CD4-positive, alpha-beta T cell (primary cell): ENCODE measurements at regions of chr3 and their contacts with region 1.

Region 1: GRCh38 chr3:155805802-155806618 is at the start of gene C3orf33:
- DNase-seq: peak; percentile 46 to 90 (median 71)
- ATAC-seq: peak; percentile 95
- H3K4me3 ChIP-seq: peak within 1 kb of the TSS; percentile 90
- H3K4me3 Mint-ChIP-seq: peak within 1 kb of the TSS; percentile 89
- H3K27ac ChIP-seq: peak within 1 kb of the TSS; percentile 46 to 61
- H3K27ac Mint-ChIP-seq: peak within 1 kb of the TSS; percentile 80
- H3K4me1 ChIP-seq: peaks cover 13% of the 10 kb centered on the region
- H3K4me1 Mint-ChIP-seq: peaks cover 17% of the 10 kb centered on the region
- H3K27me3 ChIP-seq: no peaks in the 10 kb centered on the region
- H3K27me3 Mint-ChIP-seq: peaks cover 6% of the 10 kb centered on the region
- CTCF ChIP-seq: peak; percentile 98
- total RNA-seq, gene C3orf33: 2.4 to 2.6 TPM

Region 2: GRCh38 chr3:155737844-155738460 is 68.1 kb before region 1 on chr3:
- CTCF ChIA-PET with region 1: interaction called, 4 read pairs
- POLR2A ChIA-PET with region 1: no interaction called
- intact Hi-C with region 1: loop called in 1 of 2 experiments (anchors 2 kb)
- DNase-seq: no peak
- ATAC-seq: no peak
- H3K4me3 ChIP-seq: no peak overlapping the region
- H3K4me3 Mint-ChIP-seq: no peak overlapping the region
- H3K27ac ChIP-seq: no peak overlapping the region
- H3K27ac Mint-ChIP-seq: no peak overlapping the region
- H3K4me1 ChIP-seq: no peaks in the 10 kb centered on the region
- H3K4me1 Mint-ChIP-seq: peaks cover 6% of the 10 kb centered on the region
- H3K27me3 ChIP-seq: peaks cover 8 to 23% of the 10 kb centered on the region in 2 experiments
- H3K27me3 Mint-ChIP-seq: peaks cover 53% of the 10 kb centered on the region
- CTCF ChIP-seq: no peak

Region 3: DNA sequence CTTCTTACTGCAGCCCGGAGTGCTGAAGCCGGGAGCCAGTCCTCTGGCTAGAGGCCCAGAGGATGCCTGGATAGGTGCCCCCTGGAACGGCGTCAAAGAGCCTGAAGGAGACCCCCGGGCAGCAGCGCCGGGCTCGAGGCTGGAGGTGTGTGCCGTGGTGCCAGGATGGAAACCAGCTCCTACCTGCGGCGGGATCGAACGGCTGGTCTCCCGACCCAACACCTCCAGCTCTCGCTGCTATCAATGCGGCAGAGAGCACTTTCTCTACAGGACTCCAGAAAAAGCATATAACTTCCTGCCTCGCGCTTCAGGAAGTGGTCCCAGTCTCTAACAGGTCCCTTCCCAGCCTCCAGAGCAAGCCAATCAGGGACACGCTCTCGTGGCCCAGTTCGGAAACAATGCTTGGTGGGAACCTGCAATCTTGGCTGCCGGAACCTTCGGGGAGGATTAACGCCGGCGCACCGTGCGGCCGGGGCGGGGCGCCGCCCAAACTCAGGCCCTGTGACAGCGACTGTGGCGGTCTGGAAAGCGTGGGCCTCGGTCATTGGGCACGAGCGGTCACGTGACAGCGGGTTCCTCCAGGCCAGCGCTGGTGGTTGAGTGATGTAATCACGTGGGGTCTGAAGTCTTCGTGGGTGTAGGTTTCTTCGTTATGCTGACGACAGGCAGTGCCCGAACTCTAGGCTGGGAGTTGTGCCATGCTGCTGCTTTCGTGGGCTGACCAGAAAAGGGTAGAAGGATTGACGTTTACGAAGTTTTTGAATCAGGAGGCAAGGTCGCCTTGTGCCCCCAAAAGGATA is 48.3 kb after region 1 on chr3 and contains the start of gene SLC33A1:
- CTCF ChIA-PET with region 1: interaction called, 20 read pairs
- POLR2A ChIA-PET with region 1: interaction called, 27 read pairs
- intact Hi-C with region 1: loop called (anchors 2 kb)
- DNase-seq: peak; percentile 96 to 100 (median 98)
- ATAC-seq: peak; percentile 90
- H3K4me3 ChIP-seq: peak within 1 kb of the TSS; percentile 93
- H3K4me3 Mint-ChIP-seq: peak within 1 kb of the TSS; percentile 97
- H3K27ac ChIP-seq: peak within 1 kb of the TSS; percentile 74 to 98
- H3K27ac Mint-ChIP-seq: peak within 1 kb of the TSS; percentile 98
- H3K4me1 ChIP-seq: peaks cover 52% of the 10 kb centered on the region
- H3K4me1 Mint-ChIP-seq: peaks cover 47% of the 10 kb centered on the region
- H3K27me3 ChIP-seq: no peaks in the 10 kb centered on the region
- H3K27me3 Mint-ChIP-seq: no peaks in the 10 kb centered on the region
- CTCF ChIP-seq: peak; percentile 2
- total RNA-seq, gene SLC33A1: 14.6 to 16.4 TPM

Region 4: DNA sequence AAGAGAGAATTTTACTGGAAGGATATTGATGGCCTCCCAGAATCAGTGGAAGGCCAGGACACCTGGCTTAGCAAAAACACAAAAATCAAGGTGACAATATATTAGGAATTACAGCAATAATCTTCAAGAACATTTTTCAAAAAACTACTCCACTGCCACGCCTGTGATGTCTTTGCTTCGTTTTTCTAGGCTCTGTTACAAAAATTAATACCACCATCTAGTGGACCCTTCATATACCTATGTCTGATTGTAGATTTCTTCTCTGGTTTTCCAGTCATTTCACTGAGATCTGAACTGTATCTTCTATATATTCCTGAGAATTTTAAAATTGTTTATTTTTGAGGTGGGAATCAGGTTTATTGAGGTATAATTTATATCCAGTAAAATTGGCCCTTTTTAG is 53.8 kb after region 1 on chr3:
- CTCF ChIA-PET with region 1: interaction called, 21 read pairs
- POLR2A ChIA-PET with region 1: interaction called, 3 read pairs
- intact Hi-C with region 1: loop called (anchors 2 kb)
- DNase-seq: peak in 3 of 14 experiments; percentile 26 to 30 (median 26)
- ATAC-seq: no peak
- H3K4me3 ChIP-seq: no peak overlapping the region
- H3K4me3 Mint-ChIP-seq: no peak overlapping the region
- H3K27ac ChIP-seq: no peak overlapping the region
- H3K27ac Mint-ChIP-seq: no peak overlapping the region
- H3K4me1 ChIP-seq: peaks cover 20% of the 10 kb centered on the region
- H3K4me1 Mint-ChIP-seq: peaks cover 3% of the 10 kb centered on the region
- H3K27me3 ChIP-seq: no peaks in the 10 kb centered on the region
- H3K27me3 Mint-ChIP-seq: no peaks in the 10 kb centered on the region
- CTCF ChIP-seq: no peak

Region 5: GRCh38 chr3:155870133-155870944 is 64.3 kb after region 1 on chr3 and contains the start of gene GMPS:
- CTCF ChIA-PET with region 1: interaction called, 54 read pairs
- POLR2A ChIA-PET with region 1: interaction called, 45 read pairs
- intact Hi-C with region 1: loop called (anchors 2 to 5 kb)
- DNase-seq: peak; percentile 87 to 98 (median 95)
- ATAC-seq: peak; percentile 91
- H3K4me3 ChIP-seq: peak within 1 kb of the TSS; percentile 69
- H3K4me3 Mint-ChIP-seq: peak within 1 kb of the TSS; percentile 97
- H3K27ac ChIP-seq: peak within 1 kb of the TSS; percentile 79 to 86
- H3K27ac Mint-ChIP-seq: peak within 1 kb of the TSS; percentile 95
- H3K4me1 ChIP-seq: peaks cover 23% of the 10 kb centered on the region
- H3K4me1 Mint-ChIP-seq: peaks cover 32% of the 10 kb centered on the region
- H3K27me3 ChIP-seq: no peaks in the 10 kb centered on the region
- H3K27me3 Mint-ChIP-seq: no peaks in the 10 kb centered on the region
- CTCF ChIP-seq: peak; percentile 47
- total RNA-seq, gene GMPS: 34.1 to 34.3 TPM

Region 6: DNA sequence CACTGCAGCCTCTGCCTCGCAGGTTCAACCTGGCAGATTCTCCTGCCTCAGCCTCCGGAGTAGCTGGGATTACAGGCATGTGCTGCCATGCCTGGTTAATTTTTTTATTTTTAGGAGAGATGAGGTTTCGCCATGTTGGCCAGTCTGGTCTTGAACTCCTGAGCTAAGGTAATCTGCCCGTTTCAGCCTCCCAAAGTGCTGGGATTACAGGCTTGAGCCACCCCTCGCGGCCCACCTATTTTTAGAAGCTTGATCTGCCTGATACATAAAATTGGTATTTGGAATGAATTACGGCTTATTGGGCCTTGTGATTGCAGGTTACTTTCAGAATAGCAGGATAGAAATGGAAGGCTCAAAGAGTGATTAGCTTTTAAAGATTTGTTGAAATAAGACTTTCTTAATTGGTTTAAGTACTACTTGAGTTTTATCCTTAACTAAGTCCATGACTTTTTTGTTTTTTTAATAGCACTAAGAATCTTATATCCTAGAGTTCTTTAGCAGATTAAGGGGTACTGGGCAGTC is 89.4 kb after region 1 on chr3:
- CTCF ChIA-PET with region 1: interaction called, 10 read pairs
- POLR2A ChIA-PET with region 1: no interaction called
- intact Hi-C with region 1: no loop called
- DNase-seq: no peak
- ATAC-seq: no peak
- H3K4me3 ChIP-seq: no peak overlapping the region
- H3K4me3 Mint-ChIP-seq: no peak overlapping the region
- H3K27ac ChIP-seq: no peak overlapping the region
- H3K27ac Mint-ChIP-seq: no peak overlapping the region
- H3K4me1 ChIP-seq: no peaks in the 10 kb centered on the region
- H3K4me1 Mint-ChIP-seq: peaks cover 7% of the 10 kb centered on the region
- H3K27me3 ChIP-seq: no peaks in the 10 kb centered on the region
- H3K27me3 Mint-ChIP-seq: no peaks in the 10 kb centered on the region
- CTCF ChIP-seq: no peak

Region 7: GRCh38 chr3:155919728-155920127 is 113.7 kb after region 1 on chr3:
- CTCF ChIA-PET with region 1: interaction called, 11 read pairs
- POLR2A ChIA-PET with region 1: no interaction called
- intact Hi-C with region 1: no loop called
- DNase-seq: no peak
- ATAC-seq: no peak
- H3K4me3 ChIP-seq: no peak overlapping the region
- H3K4me3 Mint-ChIP-seq: no peak overlapping the region
- H3K27ac ChIP-seq: no peak overlapping the region
- H3K27ac Mint-ChIP-seq: no peak overlapping the region
- H3K4me1 ChIP-seq: no peaks in the 10 kb centered on the region
- H3K4me1 Mint-ChIP-seq: no peaks in the 10 kb centered on the region
- H3K27me3 ChIP-seq: no peaks in the 10 kb centered on the region
- H3K27me3 Mint-ChIP-seq: no peaks in the 10 kb centered on the region
- CTCF ChIP-seq: no peak

Region 8: GRCh38 chr3:156304406-156304805 is 498.4 kb after region 1 on chr3:
- CTCF ChIA-PET with region 1: no interaction called
- POLR2A ChIA-PET with region 1: no interaction called
- intact Hi-C with region 1: no loop called
- DNase-seq: no peak
- ATAC-seq: no peak
- H3K4me3 ChIP-seq: no peak overlapping the region
- H3K4me3 Mint-ChIP-seq: no peak overlapping the region
- H3K27ac ChIP-seq: no peak overlapping the region
- H3K27ac Mint-ChIP-seq: no peak overlapping the region
- H3K4me1 ChIP-seq: no peaks in the 10 kb centered on the region
- H3K4me1 Mint-ChIP-seq: no peaks in the 10 kb centered on the region
- H3K27me3 ChIP-seq: no peaks in the 10 kb centered on the region
- H3K27me3 Mint-ChIP-seq: peaks cover 13% of the 10 kb centered on the region
- CTCF ChIP-seq: no peak

Region 9: DNA sequence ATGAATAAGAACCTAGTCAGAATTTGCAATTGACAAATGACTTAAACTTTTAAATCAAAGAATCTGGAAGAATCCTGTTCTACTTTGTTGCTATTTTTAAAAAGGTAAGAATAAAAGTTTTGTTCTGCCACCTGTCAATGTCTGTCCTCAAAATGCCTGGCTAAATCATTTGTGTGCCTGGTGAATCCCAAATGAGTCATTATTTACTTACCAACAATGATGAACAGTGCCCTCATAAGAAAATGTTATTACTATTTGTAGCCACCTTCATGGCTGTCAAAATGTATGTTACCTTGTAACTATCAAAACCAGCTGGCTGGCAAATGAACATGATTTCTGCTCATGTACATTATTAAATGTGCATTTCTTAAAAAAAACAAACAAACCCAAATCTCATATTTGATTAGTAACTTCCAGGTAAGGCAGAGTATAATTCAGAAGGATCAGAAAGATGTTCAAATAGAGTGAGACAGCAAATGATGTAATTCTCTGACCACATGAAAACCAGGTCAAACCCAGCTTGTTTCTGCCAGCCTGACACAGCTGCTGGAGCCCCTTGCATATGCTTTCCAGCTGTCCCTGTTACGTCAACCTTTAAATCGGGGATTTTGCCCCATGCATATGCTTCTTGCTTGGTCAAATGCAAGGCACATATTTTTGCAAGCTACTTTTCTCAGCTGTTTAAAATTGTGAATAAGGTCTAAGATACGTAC is 611.0 kb after region 1 on chr3:
- CTCF ChIA-PET with region 1: no interaction called
- POLR2A ChIA-PET with region 1: no interaction called
- intact Hi-C with region 1: no loop called
- DNase-seq: no peak
- ATAC-seq: no peak
- H3K4me3 ChIP-seq: no peak overlapping the region
- H3K4me3 Mint-ChIP-seq: no peak overlapping the region
- H3K27ac ChIP-seq: no peak overlapping the region
- H3K27ac Mint-ChIP-seq: no peak overlapping the region
- H3K4me1 ChIP-seq: no peaks in the 10 kb centered on the region
- H3K4me1 Mint-ChIP-seq: no peaks in the 10 kb centered on the region
- H3K27me3 ChIP-seq: no peaks in the 10 kb centered on the region
- H3K27me3 Mint-ChIP-seq: peaks cover 5% of the 10 kb centered on the region
- CTCF ChIP-seq: no peak